MCF 10A (cell line): ENCODE measurements at regions of chr20 and their contacts with region 1.

Region 1: GRCh38 chr20:43514062-43514999 is 6.8 kb downstream of the L3MBTL1 start:
- DNase-seq: peak; percentile 99
- H3K4me3 Mint-ChIP-seq: peak overlapping the region; percentile 99
- H3K27ac Mint-ChIP-seq: peak overlapping the region; percentile 89
- H3K4me1 Mint-ChIP-seq: peaks cover 20% of the 10 kb centered on the region
- H3K27me3 Mint-ChIP-seq: no peaks in the 10 kb centered on the region
- CTCF ChIP-seq: peak; percentile 11

Region 2: DNA sequence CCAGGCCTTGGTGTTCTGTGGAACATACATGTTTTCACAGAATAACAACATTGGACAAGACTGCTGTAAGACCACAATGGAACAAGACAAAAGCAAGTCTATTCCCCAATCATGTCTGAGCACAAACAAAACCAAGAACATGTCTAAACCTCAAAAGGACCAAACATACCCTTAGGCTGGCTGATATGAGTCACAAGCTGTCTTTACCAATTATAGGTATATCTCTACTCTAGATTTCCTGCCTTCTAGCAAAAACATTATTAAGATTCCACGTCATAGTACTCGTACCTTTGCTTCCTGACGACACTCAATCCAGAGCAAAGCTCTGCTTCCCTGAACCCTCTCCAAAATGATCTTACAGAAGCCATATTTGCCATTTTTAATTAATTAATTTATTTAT is 22.2 kb before region 1 on chr20:
- CTCF ChIA-PET with region 1: no interaction called
- POLR2A ChIA-PET with region 1: interaction called, 10 read pairs
- intact Hi-C with region 1: no loop called
- DNase-seq: peak; percentile 88
- H3K4me3 Mint-ChIP-seq: no peak overlapping the region
- H3K27ac Mint-ChIP-seq: peak overlapping the region; percentile 77
- H3K4me1 Mint-ChIP-seq: no peaks in the 10 kb centered on the region
- H3K27me3 Mint-ChIP-seq: no peaks in the 10 kb centered on the region
- CTCF ChIP-seq: no peak

Region 3: GRCh38 chr20:43530321-43531090 is 16.2 kb after region 1 on chr20:
- CTCF ChIA-PET with region 1: interaction called, 16 read pairs
- POLR2A ChIA-PET with region 1: interaction called, 8 read pairs
- intact Hi-C with region 1: no loop called
- DNase-seq: no peak
- H3K4me3 Mint-ChIP-seq: no peak overlapping the region
- H3K27ac Mint-ChIP-seq: no peak overlapping the region
- H3K4me1 Mint-ChIP-seq: no peaks in the 10 kb centered on the region
- H3K27me3 Mint-ChIP-seq: no peaks in the 10 kb centered on the region
- CTCF ChIP-seq: no peak

Region 4: DNA sequence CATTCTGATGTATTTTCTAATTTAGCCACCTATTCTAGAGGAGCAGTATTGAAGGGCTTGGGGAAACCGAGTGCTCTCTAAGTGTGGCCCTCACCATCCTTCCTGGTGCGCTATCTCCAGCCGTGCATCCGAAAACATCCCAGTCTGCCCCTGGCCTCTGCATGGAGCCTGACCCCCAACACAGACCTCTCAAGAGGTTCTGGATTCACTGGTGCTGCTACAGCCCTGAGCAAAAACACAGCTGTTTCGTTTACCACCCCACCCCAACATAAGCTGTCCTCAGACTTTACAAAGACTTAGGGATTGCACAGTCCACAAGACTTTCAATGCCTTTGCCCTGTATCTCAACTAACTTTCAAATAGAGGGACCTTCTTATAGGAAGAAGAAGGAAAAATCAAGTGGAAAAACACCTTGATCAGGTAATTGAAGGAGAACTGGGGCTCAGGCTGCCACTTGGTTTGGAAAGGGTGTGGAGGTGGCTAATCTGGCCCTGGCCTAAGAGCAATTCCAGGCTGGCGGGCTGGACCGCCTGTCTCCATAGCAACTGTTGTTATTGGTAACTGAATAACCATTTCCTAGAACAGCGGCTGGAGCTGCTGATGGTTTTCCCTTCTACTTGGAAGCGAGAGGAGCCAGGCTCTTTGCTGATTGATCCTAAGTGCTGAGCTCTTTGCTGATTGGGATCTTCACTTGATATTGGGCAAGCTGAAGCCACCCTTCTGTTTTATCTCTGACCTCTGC is 310.1 kb after region 1 on chr20:
- CTCF ChIA-PET with region 1: no interaction called
- POLR2A ChIA-PET with region 1: no interaction called
- intact Hi-C with region 1: no loop called
- DNase-seq: no peak
- H3K4me3 Mint-ChIP-seq: no peak overlapping the region
- H3K27ac Mint-ChIP-seq: no peak overlapping the region
- H3K4me1 Mint-ChIP-seq: peaks cover 14% of the 10 kb centered on the region
- H3K27me3 Mint-ChIP-seq: peaks cover 9% of the 10 kb centered on the region
- CTCF ChIP-seq: no peak